ENCODE measurements at regions of chr18 and their contacts with region 1.

Region 1: GRCh38 chr18:49510393-49511115 is 23.5 kb upstream of the C18orf32 start:
- DNase-seq: peak; percentile 43
- H3K27ac ChIP-seq: no peak overlapping the region
- CTCF ChIP-seq: peak; percentile 82

Region 2: DNA sequence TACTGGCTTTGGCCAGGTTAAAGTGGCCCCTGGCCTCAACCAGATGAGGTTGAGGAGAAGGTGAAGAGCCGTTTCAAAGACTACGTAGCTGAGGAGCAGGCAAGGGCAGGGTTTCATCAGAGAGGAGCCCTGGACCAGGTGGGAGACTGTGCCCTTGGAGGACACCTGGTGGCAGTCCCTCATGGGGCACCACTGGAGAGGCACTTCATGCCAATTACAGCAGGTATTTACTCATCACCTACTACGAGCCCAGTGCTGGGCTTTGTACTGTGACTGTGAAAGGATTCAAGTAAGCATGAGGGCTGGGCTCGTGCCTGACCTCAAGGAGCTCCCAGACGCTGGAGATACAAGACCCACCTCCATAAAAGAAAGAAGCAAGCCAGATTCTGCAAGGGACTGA is 597.4 kb before region 1 on chr18:
- CTCF ChIA-PET with region 1: no interaction called
- POLR2A ChIA-PET with region 1: no interaction called
- DNase-seq: no peak
- H3K27ac ChIP-seq: no peak overlapping the region
- CTCF ChIP-seq: no peak

Region 3: GRCh38 chr18:49441338-49441938 is 69.1 kb before region 1 on chr18:
- CTCF ChIA-PET with region 1: no interaction called
- POLR2A ChIA-PET with region 1: no interaction called
- DNase-seq: no peak
- H3K27ac ChIP-seq: no peak overlapping the region
- CTCF ChIP-seq: no peak

Region 4: GRCh38 chr18:49784427-49785185 is 274.1 kb after region 1 on chr18:
- CTCF ChIA-PET with region 1: interaction called, 14 read pairs
- POLR2A ChIA-PET with region 1: no interaction called
- DNase-seq: no peak
- H3K27ac ChIP-seq: no peak overlapping the region
- CTCF ChIP-seq: no peak